ENCODE measurements at regions of chr17 and their contacts with region 1.

Region 1: DNA sequence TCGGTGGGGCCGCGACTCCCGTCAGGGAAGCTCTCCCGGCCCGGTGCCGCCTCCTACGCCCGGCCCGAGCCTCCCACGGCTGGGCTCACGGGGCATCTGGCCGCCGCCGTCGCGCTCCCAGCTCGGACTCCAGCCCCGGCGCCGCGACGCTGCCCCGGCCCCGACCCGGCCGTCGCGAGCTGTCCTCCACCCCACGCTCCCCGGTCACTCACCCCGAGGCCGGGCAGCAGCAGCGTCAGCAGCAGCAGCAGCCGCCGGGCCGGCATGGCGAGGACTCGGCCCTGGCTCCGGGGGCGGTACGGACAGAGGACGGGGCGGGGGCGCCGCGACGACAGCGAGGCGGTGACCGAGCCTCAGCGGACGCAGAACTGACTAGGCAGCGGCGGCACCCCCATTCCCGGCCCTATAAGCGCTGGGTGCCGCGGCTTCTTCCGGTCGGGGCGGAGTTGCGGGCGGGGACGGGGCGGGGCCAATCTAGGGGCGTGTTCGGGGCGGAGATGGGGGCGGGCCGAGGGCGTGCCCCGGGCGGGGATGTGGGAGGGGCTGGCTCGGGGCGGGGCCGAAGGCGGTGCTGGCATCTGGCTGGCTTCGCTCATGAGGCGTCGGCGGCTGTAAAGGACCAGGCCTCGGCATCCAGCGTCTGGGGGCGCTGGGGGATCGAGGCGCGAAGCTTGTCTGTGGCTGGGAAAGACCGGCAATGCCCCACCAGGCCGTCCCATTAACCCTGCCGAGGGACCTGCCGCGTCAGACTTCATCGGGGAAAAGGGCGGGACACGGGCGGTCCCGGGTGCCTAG is at the start of gene ERN1:
- DNase-seq: peak; percentile 90 to 92 (median 90)
- H3K4me3 ChIP-seq: peak within 1 kb of the TSS; percentile 76 to 86
- H3K4me3 Mint-ChIP-seq: peak within 1 kb of the TSS; percentile 95 to 99 (median 98)
- H3K27ac ChIP-seq: peak within 1 kb of the TSS; percentile 86
- H3K27ac Mint-ChIP-seq: peak within 1 kb of the TSS; percentile 96 to 99 (median 98)
- H3K4me1 ChIP-seq: peaks cover 56% of the 10 kb centered on the region
- H3K4me1 Mint-ChIP-seq: peaks cover 33 to 61% (median 45%) of the 10 kb centered on the region in 4 donors
- H3K27me3 ChIP-seq: no peaks in the 10 kb centered on the region
- H3K27me3 Mint-ChIP-seq: no peaks in the 10 kb centered on the region
- total RNA-seq, gene ERN1: 163 to 172 TPM

Region 2: GRCh38 chr17:63762161-63763078 is 367.5 kb before region 1 on chr17:
- CTCF ChIA-PET with region 1: no interaction called
- POLR2A ChIA-PET with region 1: no interaction called
- intact Hi-C with region 1: no loop called
- DNase-seq: no peak
- H3K4me3 ChIP-seq: no peak overlapping the region
- H3K4me3 Mint-ChIP-seq: no peak overlapping the region
- H3K27ac ChIP-seq: no peak overlapping the region
- H3K27ac Mint-ChIP-seq: peak overlapping the region in 3 of 7 donors; percentile 26 to 72 (median 40)
- H3K4me1 ChIP-seq: peaks cover 6% of the 10 kb centered on the region
- H3K4me1 Mint-ChIP-seq: peaks cover 13 to 21% (median 15%) of the 10 kb centered on the region in 4 donors
- H3K27me3 ChIP-seq: no peaks in the 10 kb centered on the region
- H3K27me3 Mint-ChIP-seq: no peaks in the 10 kb centered on the region

Region 3: DNA sequence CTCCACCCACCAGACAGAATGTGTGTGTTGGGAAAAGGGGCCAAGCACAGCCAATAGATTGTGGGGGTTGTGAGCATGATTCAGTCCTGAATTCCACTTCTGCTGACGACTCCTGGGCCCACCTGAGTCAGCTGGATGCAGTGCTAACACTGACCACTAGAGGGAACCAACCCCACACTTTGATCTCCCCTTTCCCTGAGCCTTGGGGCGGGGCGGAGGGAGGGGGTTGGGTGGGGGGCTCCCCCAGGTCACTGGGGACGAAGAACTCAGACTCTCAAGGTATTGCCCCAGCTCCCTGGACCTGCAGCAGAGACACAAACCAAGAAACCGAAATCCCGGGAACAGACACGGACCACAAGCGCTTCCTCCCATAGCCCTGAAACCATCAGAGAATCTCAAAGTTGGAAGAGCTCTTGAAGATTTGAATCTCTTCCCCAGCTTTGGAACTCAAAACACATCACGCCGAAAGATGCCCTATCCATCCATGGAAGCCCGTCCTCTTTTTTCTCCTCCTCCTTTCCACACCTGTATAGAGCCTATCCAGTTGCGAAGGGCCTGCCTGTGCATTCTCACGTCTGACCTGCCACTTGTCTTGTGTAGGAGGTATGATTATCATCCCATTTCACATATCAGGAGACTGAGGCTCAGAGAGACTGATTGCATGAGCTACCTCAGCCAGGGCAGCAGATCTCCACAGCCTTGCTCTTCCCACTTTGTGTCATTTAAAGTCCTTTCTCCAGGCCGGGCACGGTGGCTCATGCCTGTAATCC is 218.1 kb before region 1 on chr17:
- CTCF ChIA-PET with region 1: interaction called, 179 read pairs
- POLR2A ChIA-PET with region 1: interaction called, 3 read pairs
- intact Hi-C with region 1: no loop called
- DNase-seq: peak; percentile 48 to 63 (median 52)
- H3K4me3 ChIP-seq: no peak overlapping the region
- H3K4me3 Mint-ChIP-seq: no peak overlapping the region
- H3K27ac ChIP-seq: no peak overlapping the region
- H3K27ac Mint-ChIP-seq: peak overlapping the region in 1 of 7 donors; percentile 87
- H3K4me1 ChIP-seq: no peaks in the 10 kb centered on the region
- H3K4me1 Mint-ChIP-seq: peaks cover 0 to 2% (median 0%) of the 10 kb centered on the region in 4 donors
- H3K27me3 ChIP-seq: no peaks in the 10 kb centered on the region
- H3K27me3 Mint-ChIP-seq: peaks cover 0 to 2% of the 10 kb centered on the region in 2 donors

Region 4: GRCh38 chr17:63946440-63947367 is 183.3 kb before region 1 on chr17:
- CTCF ChIA-PET with region 1: interaction called, 30 read pairs
- POLR2A ChIA-PET with region 1: interaction called, 5 read pairs
- intact Hi-C with region 1: no loop called
- DNase-seq: peak; percentile 59 to 69 (median 64)
- H3K4me3 ChIP-seq: peak overlapping the region; percentile 6 to 31
- H3K4me3 Mint-ChIP-seq: peak overlapping the region; percentile 41 to 87 (median 78)
- H3K27ac ChIP-seq: no peak overlapping the region
- H3K27ac Mint-ChIP-seq: peak overlapping the region in 6 of 7 donors; percentile 57 to 88 (median 71)
- H3K4me1 ChIP-seq: peaks cover 22% of the 10 kb centered on the region
- H3K4me1 Mint-ChIP-seq: peaks cover 4 to 31% (median 19%) of the 10 kb centered on the region in 4 donors
- H3K27me3 ChIP-seq: no peaks in the 10 kb centered on the region
- H3K27me3 Mint-ChIP-seq: no peaks in the 10 kb centered on the region

Region 5: DNA sequence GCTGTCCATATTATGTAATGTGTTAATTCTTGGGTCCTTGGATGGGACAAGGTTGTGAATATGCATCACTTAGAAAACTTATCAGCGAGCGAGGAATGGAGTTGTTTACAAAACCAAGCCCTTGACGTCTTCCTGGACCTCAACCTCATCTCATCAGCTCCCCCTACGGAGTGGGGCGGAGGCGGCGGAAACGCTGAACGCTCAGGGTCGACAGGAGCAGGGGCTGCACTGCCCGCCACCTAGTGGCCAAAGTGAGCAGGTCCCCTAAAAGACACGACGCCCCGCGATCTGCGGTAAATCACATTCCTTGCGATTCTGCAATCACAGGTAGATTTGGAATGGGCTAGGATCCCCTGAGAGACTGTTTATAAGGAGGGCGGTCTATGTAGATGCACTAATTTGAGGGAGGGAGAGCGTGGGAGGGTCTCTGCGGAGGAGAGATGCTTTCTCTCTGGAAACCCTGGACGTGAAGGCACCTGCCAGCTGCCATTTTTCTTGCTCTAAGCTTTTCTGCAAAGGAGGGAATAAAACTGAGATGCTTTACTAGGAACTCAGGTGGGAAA is 104.1 kb before region 1 on chr17:
- CTCF ChIA-PET with region 1: interaction called, 798 read pairs
- POLR2A ChIA-PET with region 1: interaction called, 226 read pairs
- intact Hi-C with region 1: loop called (anchors 1 kb)
- DNase-seq: peak; percentile 95 to 98 (median 96)
- H3K4me3 ChIP-seq: peak overlapping the region in 1 of 2 donors; percentile 43
- H3K4me3 Mint-ChIP-seq: peak overlapping the region; percentile 71 to 94 (median 87)
- H3K27ac ChIP-seq: peak overlapping the region; percentile 89
- H3K27ac Mint-ChIP-seq: peak overlapping the region; percentile 94 to 99 (median 98)
- H3K4me1 ChIP-seq: peaks cover 80% of the 10 kb centered on the region
- H3K4me1 Mint-ChIP-seq: peaks cover 42 to 75% (median 59%) of the 10 kb centered on the region in 4 donors
- H3K27me3 ChIP-seq: no peaks in the 10 kb centered on the region
- H3K27me3 Mint-ChIP-seq: no peaks in the 10 kb centered on the region

Region 6: GRCh38 chr17:64056269-64057005 is 73.5 kb before region 1 on chr17:
- CTCF ChIA-PET with region 1: interaction called, 153 read pairs
- POLR2A ChIA-PET with region 1: interaction called, 60 read pairs
- intact Hi-C with region 1: loop called (anchors 1 kb)
- DNase-seq: peak in 1 of 5 donors; percentile 40
- H3K4me3 ChIP-seq: no peak overlapping the region
- H3K4me3 Mint-ChIP-seq: peak overlapping the region in 6 of 8 donors; percentile 26 to 69 (median 60)
- H3K27ac ChIP-seq: peak overlapping the region; percentile 14
- H3K27ac Mint-ChIP-seq: peak overlapping the region; percentile 42 to 93 (median 91)
- H3K4me1 ChIP-seq: peaks cover 62% of the 10 kb centered on the region
- H3K4me1 Mint-ChIP-seq: peaks cover 39 to 94% (median 65%) of the 10 kb centered on the region in 4 donors
- H3K27me3 ChIP-seq: no peaks in the 10 kb centered on the region
- H3K27me3 Mint-ChIP-seq: no peaks in the 10 kb centered on the region

Region 7: DNA sequence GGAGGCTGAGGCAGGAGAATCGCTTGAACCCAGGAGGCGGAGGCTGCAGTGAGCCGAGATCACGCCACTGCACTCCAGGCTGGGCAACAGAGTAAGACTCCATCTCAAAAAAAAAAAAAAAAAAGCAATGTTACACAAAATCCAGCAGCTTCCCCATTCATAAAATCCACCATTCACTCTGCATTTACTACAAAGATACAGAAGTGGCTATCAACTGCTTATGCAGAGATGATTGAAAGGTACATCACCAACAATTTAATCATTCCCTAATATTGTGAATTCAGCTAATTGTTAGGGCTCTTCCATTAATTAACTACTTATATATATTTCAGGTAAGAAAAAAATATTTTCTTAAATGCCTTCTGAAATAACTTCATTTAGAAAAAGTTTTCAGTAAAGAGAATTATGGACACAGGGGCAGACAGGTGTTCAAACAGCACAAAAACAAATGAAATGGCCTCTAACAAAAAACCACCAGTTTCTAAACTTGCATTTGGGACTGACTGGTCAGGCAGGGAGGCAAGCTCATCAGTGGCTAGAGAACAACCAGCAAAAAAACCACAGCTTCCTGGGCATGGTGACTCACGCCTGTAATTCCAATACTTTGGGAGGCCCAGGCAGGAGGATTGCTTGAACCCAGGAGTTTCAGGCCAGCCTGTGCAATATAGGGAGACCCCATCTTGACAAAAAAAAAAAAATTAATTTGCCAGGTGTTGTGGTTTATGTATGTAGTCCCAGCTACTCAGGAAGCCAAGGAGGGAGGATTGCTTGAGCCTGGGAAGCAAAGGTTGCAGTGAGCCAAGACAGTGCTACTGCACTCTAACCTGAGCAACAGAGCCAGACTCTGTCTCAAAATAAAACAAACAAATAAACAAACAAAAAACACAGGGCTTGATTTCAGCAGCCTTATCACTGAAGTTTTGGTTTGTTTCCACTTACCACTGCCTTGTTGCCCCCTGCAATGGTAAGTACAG is 26.3 kb before region 1 on chr17:
- CTCF ChIA-PET with region 1: interaction called, 7 read pairs
- POLR2A ChIA-PET with region 1: interaction called, 18 read pairs
- intact Hi-C with region 1: loop called (anchors 2 kb)
- DNase-seq: no peak
- H3K4me3 ChIP-seq: no peak overlapping the region
- H3K4me3 Mint-ChIP-seq: peak overlapping the region in 7 of 8 donors; percentile 7 to 65 (median 21)
- H3K27ac ChIP-seq: no peak overlapping the region
- H3K27ac Mint-ChIP-seq: peak overlapping the region in 5 of 7 donors; percentile 12 to 73 (median 36)
- H3K4me1 ChIP-seq: peaks cover 75% of the 10 kb centered on the region
- H3K4me1 Mint-ChIP-seq: peaks cover 52 to 92% (median 74%) of the 10 kb centered on the region in 4 donors
- H3K27me3 ChIP-seq: no peaks in the 10 kb centered on the region
- H3K27me3 Mint-ChIP-seq: no peaks in the 10 kb centered on the region

Region 8: GRCh38 chr17:64250233-64250835 is 120.4 kb after region 1 on chr17:
- CTCF ChIA-PET with region 1: no interaction called
- POLR2A ChIA-PET with region 1: no interaction called
- intact Hi-C with region 1: no loop called
- DNase-seq: no peak
- H3K4me3 ChIP-seq: no peak overlapping the region
- H3K4me3 Mint-ChIP-seq: no peak overlapping the region
- H3K27ac ChIP-seq: no peak overlapping the region
- H3K27ac Mint-ChIP-seq: no peak overlapping the region
- H3K4me1 ChIP-seq: no peaks in the 10 kb centered on the region
- H3K4me1 Mint-ChIP-seq: peaks cover 0 to 5% (median 2%) of the 10 kb centered on the region in 4 donors
- H3K27me3 ChIP-seq: no peaks in the 10 kb centered on the region
- H3K27me3 Mint-ChIP-seq: no peaks in the 10 kb centered on the region

Region 9: GRCh38 chr17:64281962-64282727 is 152.2 kb after region 1 on chr17:
- CTCF ChIA-PET with region 1: interaction called, 3 read pairs
- POLR2A ChIA-PET with region 1: no interaction called
- intact Hi-C with region 1: loop called (anchors 1 kb)
- DNase-seq: peak; percentile 42 to 57 (median 48)
- H3K4me3 ChIP-seq: no peak overlapping the region
- H3K4me3 Mint-ChIP-seq: no peak overlapping the region
- H3K27ac ChIP-seq: no peak overlapping the region
- H3K27ac Mint-ChIP-seq: no peak overlapping the region
- H3K4me1 ChIP-seq: no peaks in the 10 kb centered on the region
- H3K4me1 Mint-ChIP-seq: peaks cover 0 to 2% (median 0%) of the 10 kb centered on the region in 4 donors
- H3K27me3 ChIP-seq: no peaks in the 10 kb centered on the region
- H3K27me3 Mint-ChIP-seq: no peaks in the 10 kb centered on the region